Activated CD4-positive, alpha-beta T cell treated with anti-CD3 and anti-CD28 coated beads, Interleukin-2, amount 10 ng/mL, durations not matched to agents 7 days and 5 days (primary cell): ENCODE measurements at regions of chr11 and their contacts with region 1.

Region 1: GRCh38 chr11:45859661-45860140 is 12.4 kb downstream of the CRY2 start:
- DNase-seq: no peak
- H3K4me3 Mint-ChIP-seq: no peak overlapping the region
- H3K27ac Mint-ChIP-seq: no peak overlapping the region
- H3K4me1 Mint-ChIP-seq: no peaks in the 10 kb centered on the region
- H3K27me3 Mint-ChIP-seq: no peaks in the 10 kb centered on the region

Region 2: GRCh38 chr11:45617871-45618601 is 241.7 kb before region 1 on chr11:
- CTCF ChIA-PET with region 1: no interaction called
- POLR2A ChIA-PET with region 1: no interaction called
- DNase-seq: no peak
- H3K4me3 Mint-ChIP-seq: no peak overlapping the region
- H3K27ac Mint-ChIP-seq: no peak overlapping the region
- H3K4me1 Mint-ChIP-seq: no peaks in the 10 kb centered on the region
- H3K27me3 Mint-ChIP-seq: peaks cover 15% of the 10 kb centered on the region

Region 3: DNA sequence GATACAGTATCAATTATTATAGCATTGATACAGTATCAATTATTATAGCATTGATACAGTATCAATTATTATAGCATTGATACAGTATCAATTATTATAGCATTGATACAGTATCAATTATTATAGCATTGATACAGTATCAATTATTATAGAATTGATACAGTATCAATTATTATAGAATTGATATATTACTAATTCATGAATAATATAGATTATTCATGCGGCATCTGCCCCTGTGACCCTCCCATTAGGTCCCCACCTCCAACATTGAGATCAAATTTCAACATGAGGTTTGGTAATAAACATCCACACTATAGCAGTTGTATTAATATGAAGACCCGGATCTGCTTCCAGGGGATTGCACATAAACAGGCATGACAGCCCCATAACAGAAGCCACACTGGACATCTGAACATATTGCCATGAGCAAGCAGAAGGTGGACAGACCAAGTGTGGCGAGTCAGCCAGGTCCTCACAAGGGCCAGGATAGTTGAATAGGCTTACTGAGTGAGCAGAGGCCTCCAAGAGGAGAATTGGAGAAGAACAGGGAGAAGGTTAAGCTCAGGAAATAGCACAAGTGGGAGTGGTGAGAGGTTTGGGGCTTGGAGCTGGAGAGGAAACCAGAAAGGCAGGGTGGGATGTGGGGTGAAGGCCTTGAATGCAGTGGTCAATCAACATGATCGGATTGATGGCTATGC is 44.1 kb before region 1 on chr11:
- CTCF ChIA-PET with region 1: no interaction called
- POLR2A ChIA-PET with region 1: no interaction called
- DNase-seq: no peak
- H3K4me3 Mint-ChIP-seq: no peak overlapping the region
- H3K27ac Mint-ChIP-seq: no peak overlapping the region
- H3K4me1 Mint-ChIP-seq: peaks cover 4% of the 10 kb centered on the region
- H3K27me3 Mint-ChIP-seq: no peaks in the 10 kb centered on the region

Region 4: GRCh38 chr11:45843118-45843924 is 16.4 kb before region 1 on chr11:
- CTCF ChIA-PET with region 1: interaction called, 10 read pairs
- POLR2A ChIA-PET with region 1: no interaction called
- DNase-seq: peak; percentile 94
- H3K4me3 Mint-ChIP-seq: no peak overlapping the region
- H3K27ac Mint-ChIP-seq: peak overlapping the region; percentile 28
- H3K4me1 Mint-ChIP-seq: peaks cover 37% of the 10 kb centered on the region
- H3K27me3 Mint-ChIP-seq: peaks cover 15% of the 10 kb centered on the region